ENCODE measurements at regions of chr5 and their contacts with region 1.

Region 1: DNA sequence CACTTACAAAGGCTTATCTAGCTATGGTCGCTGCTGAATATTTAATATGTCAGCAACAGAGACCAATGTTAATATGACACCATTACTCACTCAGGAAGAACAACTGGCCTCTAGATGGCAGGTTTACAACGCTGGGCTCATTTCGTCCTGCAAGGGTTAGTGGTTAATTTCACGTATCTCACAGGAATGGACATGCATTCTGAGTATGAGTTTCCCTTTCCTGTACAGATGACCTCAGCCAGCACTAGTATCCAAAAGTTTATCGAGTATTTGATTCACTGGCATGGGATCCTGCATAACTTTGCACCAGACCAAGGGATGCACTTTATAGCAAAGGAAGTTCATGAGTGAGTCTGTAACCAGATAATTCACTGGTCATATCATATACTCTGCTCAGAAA is 8.7 kb upstream of the TRPC7 start:
- DNase-seq: peak; percentile 43 to 44
- H3K4me3 ChIP-seq: no peak overlapping the region
- H3K4me3 Mint-ChIP-seq: no peak overlapping the region
- H3K27ac Mint-ChIP-seq: no peak overlapping the region
- H3K4me1 ChIP-seq: no peaks in the 10 kb centered on the region
- H3K4me1 Mint-ChIP-seq: no peaks in the 10 kb centered on the region
- H3K27me3 ChIP-seq: no peaks in the 10 kb centered on the region
- H3K27me3 Mint-ChIP-seq: peaks cover 15% of the 10 kb centered on the region
- CTCF ChIP-seq: peak; percentile 45 to 55

Region 2: GRCh38 chr5:136258463-136258862 is 115.5 kb before region 1 on chr5:
- CTCF ChIA-PET with region 1: no interaction called
- POLR2A ChIA-PET with region 1: no interaction called
- intact Hi-C with region 1: no loop called
- DNase-seq: no peak
- H3K4me3 ChIP-seq: no peak overlapping the region
- H3K4me3 Mint-ChIP-seq: no peak overlapping the region
- H3K27ac Mint-ChIP-seq: no peak overlapping the region
- H3K4me1 ChIP-seq: peaks cover 8% of the 10 kb centered on the region
- H3K4me1 Mint-ChIP-seq: peaks cover 6% of the 10 kb centered on the region
- H3K27me3 ChIP-seq: no peaks in the 10 kb centered on the region
- H3K27me3 Mint-ChIP-seq: peaks cover 14% of the 10 kb centered on the region
- CTCF ChIP-seq: no peak

Region 3: GRCh38 chr5:136295914-136296313 is 78.1 kb before region 1 on chr5:
- CTCF ChIA-PET with region 1: no interaction called
- POLR2A ChIA-PET with region 1: no interaction called
- intact Hi-C with region 1: no loop called
- DNase-seq: no peak
- H3K4me3 ChIP-seq: no peak overlapping the region
- H3K4me3 Mint-ChIP-seq: no peak overlapping the region
- H3K27ac Mint-ChIP-seq: no peak overlapping the region
- H3K4me1 ChIP-seq: no peaks in the 10 kb centered on the region
- H3K4me1 Mint-ChIP-seq: no peaks in the 10 kb centered on the region
- H3K27me3 ChIP-seq: no peaks in the 10 kb centered on the region
- H3K27me3 Mint-ChIP-seq: peaks cover 15% of the 10 kb centered on the region
- CTCF ChIP-seq: no peak

Region 4: GRCh38 chr5:136332223-136333015 is 41.6 kb before region 1 on chr5:
- CTCF ChIA-PET with region 1: no interaction called
- POLR2A ChIA-PET with region 1: no interaction called
- intact Hi-C with region 1: no loop called
- DNase-seq: no peak
- H3K4me3 ChIP-seq: no peak overlapping the region
- H3K4me3 Mint-ChIP-seq: no peak overlapping the region
- H3K27ac Mint-ChIP-seq: no peak overlapping the region
- H3K4me1 ChIP-seq: no peaks in the 10 kb centered on the region
- H3K4me1 Mint-ChIP-seq: no peaks in the 10 kb centered on the region
- H3K27me3 ChIP-seq: 0 out of 2 replicates have a peak, but pooled peaks cover 1% of the 10 kb centered on the region
- H3K27me3 Mint-ChIP-seq: peaks cover 8% of the 10 kb centered on the region
- CTCF ChIP-seq: no peak

Region 5: GRCh38 chr5:136424835-136425584 is 51.0 kb after region 1 on chr5:
- CTCF ChIA-PET with region 1: no interaction called
- POLR2A ChIA-PET with region 1: no interaction called
- intact Hi-C with region 1: loop called (anchors 1 kb)
- DNase-seq: peak; percentile 83 to 89
- H3K4me3 ChIP-seq: no peak overlapping the region
- H3K4me3 Mint-ChIP-seq: no peak overlapping the region
- H3K27ac Mint-ChIP-seq: no peak overlapping the region
- H3K4me1 ChIP-seq: no peaks in the 10 kb centered on the region
- H3K4me1 Mint-ChIP-seq: no peaks in the 10 kb centered on the region
- H3K27me3 ChIP-seq: no peaks in the 10 kb centered on the region
- H3K27me3 Mint-ChIP-seq: peaks cover 24% of the 10 kb centered on the region
- CTCF ChIP-seq: peak; percentile 84 to 93

Region 6: DNA sequence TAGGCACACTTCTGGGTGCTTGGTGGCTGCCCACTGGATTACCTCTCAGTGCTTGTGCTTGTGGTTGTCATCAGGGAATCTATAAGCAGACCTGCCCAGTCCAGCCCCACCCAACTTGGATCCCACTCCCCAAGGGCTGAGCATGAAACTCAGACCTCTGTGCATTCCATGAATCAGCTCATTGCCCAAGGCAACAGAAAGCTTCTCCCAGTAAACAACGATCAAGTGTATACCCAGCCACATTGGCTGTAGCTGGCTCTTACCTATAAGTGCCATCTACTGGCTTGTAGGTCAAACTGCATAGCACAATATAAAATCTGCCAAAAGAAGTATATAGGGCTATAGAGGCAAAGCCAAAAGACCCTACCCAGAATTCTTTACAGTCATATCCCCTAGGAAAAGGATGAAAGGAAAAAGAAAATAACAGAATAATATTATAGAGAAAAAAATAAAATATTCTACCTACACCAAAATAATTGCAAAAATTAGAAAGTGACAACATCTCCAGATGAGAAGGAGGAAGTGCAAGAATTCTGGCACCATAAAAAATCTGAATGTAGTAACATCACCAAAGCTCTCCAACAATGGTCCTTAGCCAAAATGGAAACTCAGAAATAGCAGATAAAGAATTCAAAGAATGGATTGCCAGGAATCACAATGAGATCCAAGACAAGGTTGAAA is 312.3 kb after region 1 on chr5:
- CTCF ChIA-PET with region 1: no interaction called
- POLR2A ChIA-PET with region 1: no interaction called
- intact Hi-C with region 1: loop called (anchors 1 kb)
- DNase-seq: peak; percentile 36 to 48
- H3K4me3 ChIP-seq: no peak overlapping the region
- H3K4me3 Mint-ChIP-seq: no peak overlapping the region
- H3K27ac Mint-ChIP-seq: no peak overlapping the region
- H3K4me1 ChIP-seq: peaks cover 9% of the 10 kb centered on the region; the same call in 1 of the 2 replicates
- H3K4me1 Mint-ChIP-seq: peaks cover 11% of the 10 kb centered on the region
- H3K27me3 ChIP-seq: no peaks in the 10 kb centered on the region
- H3K27me3 Mint-ChIP-seq: peaks cover 2% of the 10 kb centered on the region
- CTCF ChIP-seq: peak; percentile 51 to 80